ENCODE measurements at regions of chr10 and their contacts with region 1.

Region 1: DNA sequence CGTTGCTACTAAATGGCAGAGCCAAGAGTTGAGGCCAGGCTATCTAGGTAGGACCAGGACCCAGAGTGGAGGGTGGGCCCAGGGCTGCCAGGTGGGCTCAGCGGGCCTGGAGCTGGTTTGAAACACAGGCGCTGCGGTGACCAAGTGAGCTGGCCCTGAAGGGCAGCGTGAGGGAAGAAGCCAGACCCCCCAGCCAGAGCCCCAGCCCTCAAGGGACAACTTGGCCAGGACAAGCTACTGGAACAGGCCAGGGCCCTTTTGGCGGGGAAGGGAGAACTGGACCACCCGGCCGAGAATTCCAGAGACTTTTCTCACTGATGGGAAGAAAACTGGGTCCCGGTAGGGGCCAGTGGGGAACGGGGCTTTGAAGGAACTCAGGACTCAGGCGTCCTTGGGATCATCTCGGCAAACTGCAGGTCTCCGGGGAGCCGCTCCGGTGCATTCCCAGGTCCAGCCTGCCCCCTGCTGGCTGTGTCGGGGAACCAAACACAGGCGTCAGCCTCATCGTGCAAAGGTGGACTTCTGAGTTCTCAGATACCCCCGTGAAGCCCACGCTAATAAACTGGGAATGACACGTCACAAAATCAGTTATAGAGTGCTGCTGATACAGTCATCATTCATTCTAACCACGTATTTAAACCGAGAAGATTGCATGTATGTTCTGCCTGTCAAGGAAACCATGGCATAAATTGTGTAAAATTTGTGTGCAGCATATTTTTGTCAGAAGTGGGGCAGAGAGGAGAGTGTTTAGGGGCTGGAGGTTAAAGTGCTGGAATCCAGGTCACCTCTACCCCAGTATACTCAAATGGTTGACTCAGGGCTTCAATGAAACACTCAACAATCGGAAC is 76.0 kb upstream of the CPXM2 start:
- DNase-seq: no peak
- ATAC-seq: peak; percentile 96
- H3K4me3 ChIP-seq: no peak overlapping the region
- H3K27ac ChIP-seq: no peak overlapping the region
- H3K4me1 ChIP-seq: no peaks in the 10 kb centered on the region
- H3K27me3 ChIP-seq: no peaks in the 10 kb centered on the region; a peak in 1 of 4 replicates
- CTCF ChIP-seq: peak; percentile 90 to 93 (median 91)
- EP300 ChIP-seq: no peak
- POLR2A ChIP-seq: no peak
- RAD21 ChIP-seq: peak; percentile 96

Region 2: DNA sequence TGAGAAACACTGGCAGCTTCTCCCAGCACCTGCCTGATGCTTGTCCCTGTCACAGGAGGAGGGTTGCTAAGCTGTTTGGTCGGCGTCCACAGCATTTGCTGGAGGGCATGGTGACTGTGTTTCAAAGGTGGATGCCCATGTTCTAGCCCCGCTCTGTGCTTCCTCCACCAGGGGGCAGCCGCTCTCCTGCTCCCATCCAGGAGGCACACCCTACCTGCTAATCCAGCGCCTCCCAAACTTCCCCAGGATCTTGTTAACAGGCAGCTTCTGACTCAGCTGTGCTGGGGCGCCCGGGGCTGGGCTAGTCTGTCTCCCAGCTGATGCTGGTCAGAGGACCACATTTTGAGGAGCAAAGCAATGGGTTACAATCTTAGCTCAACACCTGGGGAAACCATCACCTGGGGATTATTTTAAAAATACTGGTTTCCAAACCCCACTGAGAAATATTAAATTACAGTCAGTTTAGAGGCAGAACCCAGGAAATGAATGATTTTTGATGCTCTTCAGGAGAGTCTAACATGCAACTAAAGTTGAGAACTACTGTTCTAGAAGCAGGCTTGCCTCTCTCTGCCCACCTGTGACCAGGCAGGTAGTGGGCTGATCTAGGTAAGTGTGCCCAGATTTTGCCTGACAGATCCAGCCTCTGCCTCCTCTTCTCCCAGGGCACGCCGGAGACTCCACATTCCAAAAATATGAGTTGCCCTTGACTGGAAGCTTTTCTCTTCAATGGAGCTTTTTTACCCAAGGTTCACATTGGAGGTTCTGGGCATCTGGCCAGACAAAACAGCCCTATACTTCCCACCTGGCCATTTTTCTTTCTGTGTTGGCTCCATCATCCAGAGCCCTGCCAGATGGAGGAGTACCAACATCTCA is 394.1 kb before region 1 on chr10:
- CTCF ChIA-PET with region 1: interaction called, 11 read pairs
- POLR2A ChIA-PET with region 1: no interaction called
- RAD21 ChIA-PET with region 1: interaction called, 3 read pairs
- SMC1A ChIA-PET with region 1: interaction called, 13 read pairs
- in situ Hi-C with region 1: no loop called
- intact Hi-C with region 1: no loop called
- DNase-seq: no peak
- ATAC-seq: peak; percentile 94
- H3K4me3 ChIP-seq: no peak overlapping the region
- H3K27ac ChIP-seq: no peak overlapping the region
- H3K4me1 ChIP-seq: no peaks in the 10 kb centered on the region
- H3K27me3 ChIP-seq: peaks cover 0 to 2% of the 10 kb centered on the region in 2 experiments; a peak in 1 of 4 replicates
- CTCF ChIP-seq: peak; percentile 63 to 89 (median 81)
- EP300 ChIP-seq: no peak
- POLR2A ChIP-seq: no peak
- RAD21 ChIP-seq: peak; percentile 37; the same call in 1 of the 2 replicates

Region 3: DNA sequence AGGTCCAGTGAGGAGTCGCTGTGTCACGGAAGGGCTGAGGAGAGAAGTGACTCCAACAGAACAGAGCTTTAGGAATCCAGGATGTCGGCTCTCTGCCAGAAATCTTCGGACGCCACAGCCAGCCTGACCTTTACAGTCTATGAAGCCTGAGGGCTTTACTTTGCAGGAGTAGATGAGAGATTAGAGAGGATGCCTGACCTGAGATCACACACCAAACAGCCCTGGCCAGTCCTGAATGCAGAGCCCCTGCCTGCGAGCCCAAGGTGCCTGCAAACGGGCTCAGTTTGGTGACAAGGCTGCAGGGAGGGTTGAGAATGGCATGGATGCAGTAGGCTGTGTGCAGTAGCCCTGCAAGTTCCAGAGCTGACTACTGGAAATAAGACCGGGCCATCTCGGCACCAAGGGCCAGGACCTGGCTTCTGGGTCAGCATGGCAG is 223.6 kb before region 1 on chr10:
- CTCF ChIA-PET with region 1: interaction called, 14 read pairs
- POLR2A ChIA-PET with region 1: no interaction called
- RAD21 ChIA-PET with region 1: interaction called, 9 read pairs
- SMC1A ChIA-PET with region 1: interaction called, 8 read pairs
- in situ Hi-C with region 1: no loop called
- intact Hi-C with region 1: loop called (anchors 10 kb)
- DNase-seq: no peak
- ATAC-seq: no peak
- H3K4me3 ChIP-seq: no peak overlapping the region
- H3K27ac ChIP-seq: no peak overlapping the region
- H3K4me1 ChIP-seq: no peaks in the 10 kb centered on the region
- H3K27me3 ChIP-seq: peaks cover 2% of the 10 kb centered on the region in 2 experiments; a peak in 3 of 4 replicates
- CTCF ChIP-seq: no peak
- EP300 ChIP-seq: no peak
- POLR2A ChIP-seq: no peak
- RAD21 ChIP-seq: no peak